ENCODE measurements at regions of chr12 and their contacts with region 1.

Region 1: GRCh38 chr12:93127582-93128331 is 198.7 kb upstream of the EEA1 start:
- DNase-seq: peak; percentile 87
- ATAC-seq: peak; percentile 92

Region 2: GRCh38 chr12:92753976-92754885 is 373.5 kb before region 1 on chr12:
- intact Hi-C with region 1: no loop called
- DNase-seq: no peak
- ATAC-seq: no peak

Region 3: GRCh38 chr12:92899388-92900001 is 228.3 kb before region 1 on chr12:
- intact Hi-C with region 1: no loop called
- DNase-seq: no peak
- ATAC-seq: peak; percentile 97

Region 4: DNA sequence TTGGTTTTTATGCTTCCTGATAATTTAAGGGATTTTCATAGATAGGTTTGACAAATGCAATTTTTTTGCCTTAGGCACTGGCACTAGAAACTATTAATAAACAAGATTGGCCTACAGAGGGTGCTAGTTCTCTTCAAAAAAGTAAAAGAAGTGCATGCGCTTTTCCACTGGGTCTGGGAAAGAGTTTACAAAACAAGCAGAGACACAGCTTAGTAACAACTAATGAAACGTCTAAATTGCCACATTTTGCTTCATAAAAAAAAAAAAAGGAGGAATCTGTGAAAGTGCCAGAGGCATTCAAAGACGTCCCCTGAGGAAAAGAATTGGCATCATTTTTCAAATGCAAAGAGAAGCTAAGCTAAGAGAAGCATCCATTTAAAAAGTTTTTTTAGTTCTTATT is 140.4 kb before region 1 on chr12:
- intact Hi-C with region 1: loop called (anchors 1 kb)
- DNase-seq: no peak
- ATAC-seq: peak; percentile 80

Region 5: GRCh38 chr12:93060666-93061471 is 66.9 kb before region 1 on chr12:
- intact Hi-C with region 1: loop called (anchors 5 kb)
- DNase-seq: no peak
- ATAC-seq: peak; percentile 26

Region 6: GRCh38 chr12:93223440-93224426 is 96.0 kb after region 1 on chr12:
- intact Hi-C with region 1: loop called (anchors 5 kb)
- DNase-seq: no peak
- ATAC-seq: peak; percentile 34

Region 7: GRCh38 chr12:93243689-93244513 is 116.1 kb after region 1 on chr12:
- intact Hi-C with region 1: no loop called
- DNase-seq: no peak
- ATAC-seq: peak; percentile 65

Region 8: GRCh38 chr12:93378373-93379325 is 250.9 kb after region 1 on chr12:
- intact Hi-C with region 1: loop called (anchors 2 kb)
- DNase-seq: no peak
- ATAC-seq: peak; percentile 1

Measured in Right ventricle myocardium inferior (tissue), 1 donor.